ENCODE measurements at regions of chr11 and their contacts with region 1.

Region 1: DNA sequence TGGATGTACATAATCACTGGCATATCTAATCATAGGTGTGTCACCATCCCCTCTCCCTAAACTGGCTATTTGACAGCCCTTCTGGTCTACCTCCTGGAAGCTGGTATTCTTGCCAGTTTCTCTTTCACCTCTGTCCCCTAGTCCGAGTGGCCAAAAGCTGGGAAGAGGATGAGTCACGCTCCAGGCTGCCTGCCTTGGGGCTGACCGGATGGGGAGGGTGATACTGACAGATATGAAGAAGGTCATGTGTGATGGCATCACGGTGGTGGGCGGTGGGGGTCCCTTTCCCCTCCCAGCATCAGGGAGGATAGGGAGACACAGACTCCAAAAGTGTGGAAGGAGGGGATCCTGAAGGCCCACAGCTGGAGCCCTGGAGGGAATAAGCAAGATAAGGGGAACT is 4.8 kb downstream of the OAF start:
- DNase-seq: peak; percentile 74 to 81 (median 75)
- ATAC-seq: peak; percentile 8 to 52
- H3K4me3 ChIP-seq: no peak overlapping the region
- H3K27ac ChIP-seq: peak overlapping the region; percentile 33
- H3K4me1 ChIP-seq: peaks cover 9% of the 10 kb centered on the region
- H3K27me3 ChIP-seq: no peaks in the 10 kb centered on the region

Region 2: GRCh38 chr11:120096369-120097191 is 119.1 kb before region 1 on chr11:
- intact Hi-C with region 1: no loop called
- DNase-seq: no peak
- ATAC-seq: no peak
- H3K4me3 ChIP-seq: no peak overlapping the region
- H3K27ac ChIP-seq: no peak overlapping the region
- H3K4me1 ChIP-seq: no peaks in the 10 kb centered on the region
- H3K27me3 ChIP-seq: no peaks in the 10 kb centered on the region

Region 3: DNA sequence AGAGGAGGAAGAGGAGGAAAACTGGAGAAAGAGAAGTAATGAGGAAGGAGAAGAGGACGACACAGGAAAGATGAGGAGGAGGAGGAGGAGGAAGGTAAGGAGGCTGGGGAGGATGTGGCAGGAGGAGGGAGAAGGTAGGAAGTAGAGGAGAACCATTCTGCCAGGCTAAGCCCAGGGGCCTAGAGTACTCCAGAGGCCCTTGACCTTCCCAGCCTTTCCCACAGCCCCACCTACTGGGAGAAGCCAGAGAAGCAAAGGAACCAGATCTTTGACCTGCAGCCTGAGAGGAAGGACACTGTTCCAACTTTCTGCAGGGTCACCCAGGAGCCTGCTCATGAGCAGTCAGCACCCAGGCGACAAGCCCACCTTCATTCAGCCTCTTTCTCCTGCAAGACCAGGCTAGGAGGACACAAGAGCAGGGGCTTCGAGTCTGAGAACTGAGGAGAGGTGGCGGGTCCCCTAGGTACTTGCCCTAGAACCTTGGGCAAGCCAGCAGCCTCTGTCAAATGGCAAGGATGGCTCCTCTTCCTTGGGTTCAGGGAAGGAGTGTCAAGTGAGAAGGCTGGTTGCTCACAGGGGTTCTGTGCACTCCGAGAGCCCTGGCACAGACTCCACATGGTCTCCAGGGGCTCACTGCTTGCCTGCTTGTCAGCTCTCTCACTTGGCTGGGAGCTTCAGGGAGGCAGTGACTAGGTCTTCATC is 32.7 kb before region 1 on chr11:
- intact Hi-C with region 1: loop called in 1 of 4 experiments (anchors 5 kb)
- DNase-seq: peak; percentile 80 to 85 (median 83)
- ATAC-seq: peak in 1 of 2 donors; percentile 16
- H3K4me3 ChIP-seq: no peak overlapping the region
- H3K27ac ChIP-seq: no peak overlapping the region
- H3K4me1 ChIP-seq: peaks cover 7% of the 10 kb centered on the region
- H3K27me3 ChIP-seq: no peaks in the 10 kb centered on the region